ENCODE measurements at regions of chr17 and their contacts with region 1.

Region 1: GRCh38 chr17:82648166-82648668 is at the start of gene WDR45B:
- DNase-seq: peak; percentile 88
- H3K4me3 Mint-ChIP-seq: peak within 1 kb of the TSS; percentile 80
- H3K27ac Mint-ChIP-seq: no peak within 1 kb of the TSS
- H3K4me1 Mint-ChIP-seq: peaks cover 25% of the 10 kb centered on the region
- H3K27me3 Mint-ChIP-seq: no peaks in the 10 kb centered on the region
- total RNA-seq, gene WDR45B: 23.2 to 25.0 TPM

Region 2: DNA sequence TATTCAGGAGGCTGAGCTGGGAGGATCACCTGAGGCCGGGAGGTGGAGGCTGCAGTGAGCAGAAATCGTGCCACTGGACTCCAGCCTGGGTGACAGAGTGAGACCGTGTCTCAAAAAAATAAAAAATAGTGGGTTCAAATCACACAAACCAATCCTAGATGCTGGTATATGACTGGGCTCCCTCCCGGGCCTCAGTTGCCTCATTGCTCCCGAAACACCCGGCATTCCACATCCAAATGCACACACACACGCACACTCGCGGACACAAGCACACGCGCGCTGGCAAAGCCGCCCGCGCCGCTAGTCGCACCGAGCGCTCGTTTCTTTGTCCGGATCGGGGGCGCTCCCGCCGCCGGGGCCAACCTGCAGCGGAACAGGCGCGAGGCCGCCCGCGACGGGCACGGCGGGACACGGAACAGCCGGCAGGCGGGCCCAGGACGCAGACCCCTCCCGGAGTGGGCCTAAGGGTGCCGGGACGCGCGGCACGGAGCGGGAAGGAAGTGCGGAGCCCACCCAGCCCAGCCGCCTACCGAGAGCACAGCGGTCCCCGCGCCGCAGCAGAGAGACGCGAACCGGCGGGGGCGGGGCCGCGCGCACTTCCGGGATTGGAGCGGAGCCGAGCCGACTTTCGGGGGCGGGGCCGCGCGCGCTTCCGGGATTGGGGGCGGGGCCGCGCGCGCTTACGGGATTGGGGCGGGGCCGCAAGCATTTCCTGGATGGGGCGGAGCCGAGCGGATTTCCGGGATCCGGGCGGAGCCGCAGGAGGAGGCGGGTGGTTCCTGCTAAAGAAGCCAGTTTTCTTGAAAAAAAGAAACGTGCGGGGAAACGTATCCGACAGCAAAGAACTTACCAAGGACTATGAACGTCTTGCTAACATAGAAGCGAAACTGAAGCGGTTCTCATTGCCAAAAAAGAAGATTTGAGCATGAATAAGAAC is 197.8 kb before region 1 on chr17 and contains the start of gene CYBC1:
- CTCF ChIA-PET with region 1: no interaction called
- intact Hi-C with region 1: loop called (anchors 1 kb)
- DNase-seq: peak; percentile 97
- H3K4me3 Mint-ChIP-seq: peak within 1 kb of the TSS; percentile 94
- H3K27ac Mint-ChIP-seq: peak within 1 kb of the TSS; percentile 99
- H3K4me1 Mint-ChIP-seq: peaks cover 41% of the 10 kb centered on the region
- H3K27me3 Mint-ChIP-seq: no peaks in the 10 kb centered on the region
- total RNA-seq, gene CYBC1: 292 to 294 TPM

Region 3: GRCh38 chr17:82698065-82698973 is 50.1 kb after region 1 on chr17 and contains the start of gene RAB40B:
- CTCF ChIA-PET with region 1: no interaction called
- intact Hi-C with region 1: loop called (anchors 5 kb)
- DNase-seq: peak; percentile 96
- H3K4me3 Mint-ChIP-seq: peak within 1 kb of the TSS; percentile 75
- H3K27ac Mint-ChIP-seq: no peak within 1 kb of the TSS
- H3K4me1 Mint-ChIP-seq: peaks cover 9% of the 10 kb centered on the region
- H3K27me3 Mint-ChIP-seq: peaks cover 5% of the 10 kb centered on the region
- total RNA-seq, gene RAB40B: 0.42 to 0.52 TPM

Region 4: DNA sequence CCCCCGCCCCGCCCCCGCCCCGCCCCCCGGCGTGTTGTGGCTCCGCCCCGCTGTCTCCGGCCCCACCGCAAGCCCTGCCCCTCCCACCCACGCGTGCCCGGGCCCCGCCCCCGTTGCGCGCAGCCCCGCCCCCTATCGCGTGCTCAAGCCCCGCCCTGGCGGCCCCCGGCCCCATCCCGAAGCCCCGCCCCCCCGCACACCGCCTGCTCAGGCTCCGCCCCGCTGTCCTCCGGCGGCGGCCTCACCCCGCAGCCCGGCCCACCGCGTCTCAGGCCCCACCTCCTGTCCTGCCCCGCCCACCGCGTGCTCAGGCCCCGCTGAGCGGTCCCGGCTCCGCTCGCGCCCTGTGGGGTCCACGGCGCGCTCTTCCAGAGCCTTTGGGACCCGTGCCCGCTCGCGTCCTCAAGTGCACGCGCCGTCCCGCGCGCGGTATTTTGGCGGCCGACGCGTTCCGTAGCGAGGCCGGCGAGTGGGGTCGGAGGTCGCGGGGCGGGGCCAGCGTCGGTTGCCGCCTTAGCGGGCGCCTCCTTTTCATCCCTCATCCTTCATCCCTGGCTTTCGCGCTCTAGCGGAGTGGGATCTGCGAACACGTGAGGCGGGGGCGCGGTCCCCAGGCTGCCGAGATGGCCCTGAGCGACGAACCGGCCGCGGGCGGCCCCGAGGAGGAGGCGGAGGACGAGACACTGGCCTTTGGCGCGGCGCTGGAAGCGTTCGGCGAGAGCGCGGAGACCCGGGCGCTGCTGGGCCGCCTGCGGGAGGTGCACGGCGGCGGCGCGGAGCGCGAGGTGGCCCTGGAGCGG is 103.6 kb after region 1 on chr17 and contains the start of gene TBCD:
- CTCF ChIA-PET with region 1: no interaction called
- intact Hi-C with region 1: loop called (anchors 1 kb)
- DNase-seq: peak; percentile 90
- H3K4me3 Mint-ChIP-seq: peak within 1 kb of the TSS; percentile 79
- H3K27ac Mint-ChIP-seq: peak within 1 kb of the TSS; percentile 18
- H3K4me1 Mint-ChIP-seq: peaks cover 26% of the 10 kb centered on the region
- H3K27me3 Mint-ChIP-seq: no peaks in the 10 kb centered on the region
- total RNA-seq, gene TBCD: 71.8 to 75.3 TPM